ENCODE measurements at regions of chr7 and their contacts with region 1.

Region 1: DNA sequence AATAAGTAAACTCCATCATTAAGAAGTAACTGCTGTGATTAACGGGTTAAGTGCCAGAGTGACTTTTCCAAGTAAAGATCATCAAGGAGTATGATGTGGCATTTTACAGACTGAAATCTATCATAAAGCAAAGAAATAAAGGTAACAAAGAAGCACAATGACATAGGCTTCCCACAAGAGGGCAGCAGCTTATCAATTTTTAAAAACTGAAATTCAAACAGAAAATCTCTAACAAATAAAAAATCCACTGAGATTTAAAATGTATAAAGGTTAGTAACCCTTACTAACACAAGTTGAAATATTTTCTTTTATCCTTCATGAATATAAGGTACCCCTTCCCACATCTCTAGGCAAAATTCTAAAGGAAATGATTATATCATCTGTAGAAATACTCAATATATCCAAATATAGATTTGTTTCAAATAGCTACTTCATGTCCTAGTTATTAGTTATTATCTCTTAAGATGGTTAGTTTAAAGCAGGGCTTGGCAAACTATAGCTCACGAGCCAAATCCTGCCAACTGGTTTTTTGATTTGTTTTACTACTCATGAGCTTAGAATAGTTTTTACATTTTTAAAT is 29.2 kb downstream of the FAM3C start:
- DNase-seq: peak; percentile 58
- H3K4me3 ChIP-seq: no peak overlapping the region
- H3K27ac ChIP-seq: no peak overlapping the region
- H3K4me1 ChIP-seq: peaks cover under 1% of the 10 kb centered on the region
- H3K27me3 ChIP-seq: no peaks in the 10 kb centered on the region
- CTCF ChIP-seq: peak; percentile 35 to 40
- POLR2A ChIP-seq: no peak

Region 2: DNA sequence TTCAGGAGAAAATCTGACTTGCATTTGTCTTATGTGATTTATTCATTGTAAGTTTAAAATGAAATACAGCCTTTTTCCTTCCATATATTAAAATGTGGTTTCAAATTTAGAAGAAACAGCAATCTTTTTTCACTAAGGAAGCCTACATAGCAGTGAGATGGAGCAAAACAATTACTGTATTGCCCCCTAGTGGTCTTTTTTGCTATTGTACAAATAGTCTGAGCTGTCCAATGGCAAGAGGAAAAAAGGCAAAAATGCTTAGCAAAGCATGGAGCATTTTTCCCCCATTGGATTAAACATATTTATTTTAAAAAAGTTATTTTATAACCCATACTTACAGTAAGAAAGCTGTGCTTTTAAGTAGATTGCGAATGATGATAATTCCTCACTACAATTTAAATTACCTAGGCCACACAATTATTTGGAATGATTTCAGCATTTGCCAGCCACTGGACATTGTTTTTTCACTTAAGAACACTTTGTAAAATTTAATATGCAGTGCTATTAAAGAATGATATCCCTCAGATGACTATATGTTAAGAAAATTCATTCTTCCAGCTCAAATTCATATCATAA is 258.9 kb before region 1 on chr7:
- CTCF ChIA-PET with region 1: no interaction called
- POLR2A ChIA-PET with region 1: no interaction called
- dilution Hi-C with region 1: no loop called
- intact Hi-C with region 1: no loop called
- DNase-seq: peak; percentile 78
- H3K4me3 ChIP-seq: no peak overlapping the region
- H3K27ac ChIP-seq: no peak overlapping the region
- H3K4me1 ChIP-seq: no peaks in the 10 kb centered on the region
- H3K27me3 ChIP-seq: peaks cover 12 to 16% of the 10 kb centered on the region in 2 experiments
- CTCF ChIP-seq: peak; percentile 57 to 59
- POLR2A ChIP-seq: no peak

Region 3: GRCh38 chr7:121126801-121127534 is 240.0 kb before region 1 on chr7:
- CTCF ChIA-PET with region 1: interaction called, 4 read pairs
- POLR2A ChIA-PET with region 1: no interaction called
- dilution Hi-C with region 1: no loop called
- intact Hi-C with region 1: loop called (anchors 5 kb)
- DNase-seq: peak; percentile 38
- H3K4me3 ChIP-seq: no peak overlapping the region
- H3K27ac ChIP-seq: no peak overlapping the region
- H3K4me1 ChIP-seq: no peaks in the 10 kb centered on the region
- H3K27me3 ChIP-seq: no peaks in the 10 kb centered on the region
- CTCF ChIP-seq: no peak
- POLR2A ChIP-seq: no peak

Region 4: GRCh38 chr7:121204537-121204936 is 162.4 kb before region 1 on chr7:
- CTCF ChIA-PET with region 1: no interaction called
- POLR2A ChIA-PET with region 1: no interaction called
- dilution Hi-C with region 1: no loop called
- intact Hi-C with region 1: no loop called
- DNase-seq: no peak
- H3K4me3 ChIP-seq: no peak overlapping the region
- H3K27ac ChIP-seq: no peak overlapping the region
- H3K4me1 ChIP-seq: no peaks in the 10 kb centered on the region
- H3K27me3 ChIP-seq: peaks cover 2 to 4% of the 10 kb centered on the region in 2 experiments
- CTCF ChIP-seq: no peak
- POLR2A ChIP-seq: no peak

Region 5: GRCh38 chr7:121351679-121352078 is 15.3 kb before region 1 on chr7:
- CTCF ChIA-PET with region 1: interaction called, 10 read pairs
- POLR2A ChIA-PET with region 1: no interaction called
- dilution Hi-C with region 1: no loop called
- intact Hi-C with region 1: no loop called
- DNase-seq: no peak
- H3K4me3 ChIP-seq: no peak overlapping the region
- H3K27ac ChIP-seq: no peak overlapping the region
- H3K4me1 ChIP-seq: no peaks in the 10 kb centered on the region
- H3K27me3 ChIP-seq: no peaks in the 10 kb centered on the region
- CTCF ChIP-seq: no peak
- POLR2A ChIP-seq: no peak

Region 6: DNA sequence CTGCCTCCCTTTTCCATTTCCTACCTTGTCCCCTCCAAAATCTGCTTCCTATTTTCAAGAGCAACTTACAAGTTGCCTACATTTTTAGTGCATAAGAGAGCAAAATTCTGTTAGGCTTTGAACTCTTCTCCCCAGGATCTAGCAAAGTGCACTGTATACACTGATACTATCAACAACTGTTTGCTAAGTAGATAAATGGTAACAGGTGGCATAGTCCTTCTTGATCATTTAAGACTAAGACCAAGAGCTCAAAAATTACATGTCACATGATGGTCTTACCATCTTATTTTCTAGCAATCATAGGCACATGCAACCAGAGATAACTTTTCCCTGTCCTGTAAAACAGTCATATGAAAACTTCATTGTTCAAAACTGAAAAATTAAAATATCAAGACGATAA is 13.0 kb after region 1 on chr7:
- CTCF ChIA-PET with region 1: interaction called, 12 read pairs
- POLR2A ChIA-PET with region 1: no interaction called
- dilution Hi-C with region 1: no loop called
- intact Hi-C with region 1: no loop called
- DNase-seq: no peak
- H3K4me3 ChIP-seq: no peak overlapping the region
- H3K27ac ChIP-seq: no peak overlapping the region
- H3K4me1 ChIP-seq: peaks cover 9% of the 10 kb centered on the region
- H3K27me3 ChIP-seq: no peaks in the 10 kb centered on the region
- CTCF ChIP-seq: no peak
- POLR2A ChIP-seq: no peak

Region 7: GRCh38 chr7:121563177-121563576 is 196.2 kb after region 1 on chr7:
- CTCF ChIA-PET with region 1: interaction called, 21 read pairs
- POLR2A ChIA-PET with region 1: no interaction called
- dilution Hi-C with region 1: no loop called
- intact Hi-C with region 1: no loop called
- DNase-seq: no peak
- H3K4me3 ChIP-seq: no peak overlapping the region
- H3K27ac ChIP-seq: no peak overlapping the region
- H3K4me1 ChIP-seq: no peaks in the 10 kb centered on the region
- H3K27me3 ChIP-seq: no peaks in the 10 kb centered on the region
- CTCF ChIP-seq: peak in 1 of 2 donors; percentile 34
- POLR2A ChIP-seq: no peak

Measured in endothelial cell of umbilical vein (primary cell).